Activated CD4-positive, alpha-beta T cell treated with anti-CD3 and anti-CD28 coated beads, Interleukin-2, amount 10 ng/mL, durations not matched to agents 24 days and 14 days (primary cell): ENCODE measurements at regions of chr6 and their contacts with region 1.

Region 1: DNA sequence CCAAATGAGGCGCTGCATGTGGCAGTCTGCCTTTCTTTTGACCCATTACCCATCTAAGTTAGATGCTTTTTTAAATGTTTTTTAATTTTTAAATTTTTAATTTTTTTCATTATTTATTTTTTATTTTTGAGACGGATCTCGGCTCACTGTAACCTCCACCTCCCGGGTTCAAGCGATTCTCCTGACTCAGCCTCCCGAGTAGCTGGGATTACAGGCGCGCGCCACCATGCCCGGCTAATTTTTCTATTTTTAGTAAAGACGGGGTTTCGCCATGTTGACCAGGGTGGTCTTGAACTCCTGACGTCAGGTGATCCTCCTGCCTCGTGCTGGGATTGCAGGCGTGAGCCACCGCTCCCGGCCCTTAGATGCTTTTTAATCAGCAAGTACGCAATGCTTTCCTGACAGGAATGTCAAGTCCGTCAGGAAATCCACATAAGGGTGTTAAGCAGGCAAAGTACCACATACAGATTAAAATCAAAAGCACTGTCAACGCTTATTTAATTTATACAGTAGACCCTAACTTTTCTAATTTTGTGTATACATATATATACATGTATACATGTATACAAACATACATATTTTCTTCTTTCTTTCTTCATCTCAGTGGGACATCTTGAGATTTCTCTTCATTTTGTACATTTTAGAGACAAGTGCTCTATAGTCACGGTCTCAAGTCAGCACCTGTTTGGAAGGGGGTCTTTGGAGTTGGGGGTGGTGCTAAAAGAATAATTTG is 995 bp upstream of the GSTA4 start:
- DNase-seq: peak; percentile 76
- H3K4me3 Mint-ChIP-seq: peak overlapping the region; percentile 94
- H3K27ac Mint-ChIP-seq: peak overlapping the region; percentile 99
- H3K4me1 Mint-ChIP-seq: peaks cover 39% of the 10 kb centered on the region
- H3K27me3 Mint-ChIP-seq: peaks cover 16% of the 10 kb centered on the region

Region 2: DNA sequence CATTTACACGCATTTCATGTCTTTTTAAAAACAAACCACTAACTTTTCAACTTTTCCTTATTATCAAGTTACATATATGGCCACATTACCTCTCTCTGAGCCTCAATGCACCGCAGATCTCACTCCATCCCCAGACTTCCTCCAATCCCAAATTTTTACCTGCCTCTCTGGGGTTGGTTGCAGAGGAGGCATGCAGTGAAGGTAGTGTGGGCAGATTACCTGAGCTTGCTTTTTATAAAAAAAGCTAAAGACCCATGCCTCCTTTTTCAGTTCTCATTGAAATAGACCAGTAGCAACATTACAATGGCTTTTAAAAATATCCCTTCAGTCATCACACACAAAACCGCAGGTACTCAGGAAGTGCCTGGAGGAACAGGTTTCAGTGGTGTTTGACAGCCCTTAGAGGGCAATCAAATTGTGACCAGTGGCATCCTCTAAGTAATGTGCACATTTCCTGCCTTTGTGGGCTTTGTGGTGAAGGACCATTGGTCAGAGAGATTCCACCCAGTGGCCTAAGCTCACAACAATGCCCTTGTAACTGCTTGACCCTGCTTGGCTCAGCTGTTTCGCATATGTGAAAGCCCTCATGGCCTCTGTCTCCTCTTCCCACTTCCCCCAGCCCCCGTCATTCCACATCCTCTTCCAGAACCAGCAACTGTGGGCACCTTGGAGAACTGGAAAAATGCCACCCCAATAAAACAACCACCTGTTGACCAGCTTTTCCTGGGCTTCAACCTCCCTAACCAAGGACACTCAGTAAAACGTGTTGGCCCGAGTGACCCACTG is 840.1 kb before region 1 on chr6:
- intact Hi-C with region 1: loop called (anchors 5 kb)
- DNase-seq: no peak
- H3K4me3 Mint-ChIP-seq: no peak overlapping the region
- H3K27ac Mint-ChIP-seq: peak overlapping the region; percentile 8
- H3K4me1 Mint-ChIP-seq: peaks cover 21% of the 10 kb centered on the region
- H3K27me3 Mint-ChIP-seq: peaks cover 15% of the 10 kb centered on the region

Region 3: DNA sequence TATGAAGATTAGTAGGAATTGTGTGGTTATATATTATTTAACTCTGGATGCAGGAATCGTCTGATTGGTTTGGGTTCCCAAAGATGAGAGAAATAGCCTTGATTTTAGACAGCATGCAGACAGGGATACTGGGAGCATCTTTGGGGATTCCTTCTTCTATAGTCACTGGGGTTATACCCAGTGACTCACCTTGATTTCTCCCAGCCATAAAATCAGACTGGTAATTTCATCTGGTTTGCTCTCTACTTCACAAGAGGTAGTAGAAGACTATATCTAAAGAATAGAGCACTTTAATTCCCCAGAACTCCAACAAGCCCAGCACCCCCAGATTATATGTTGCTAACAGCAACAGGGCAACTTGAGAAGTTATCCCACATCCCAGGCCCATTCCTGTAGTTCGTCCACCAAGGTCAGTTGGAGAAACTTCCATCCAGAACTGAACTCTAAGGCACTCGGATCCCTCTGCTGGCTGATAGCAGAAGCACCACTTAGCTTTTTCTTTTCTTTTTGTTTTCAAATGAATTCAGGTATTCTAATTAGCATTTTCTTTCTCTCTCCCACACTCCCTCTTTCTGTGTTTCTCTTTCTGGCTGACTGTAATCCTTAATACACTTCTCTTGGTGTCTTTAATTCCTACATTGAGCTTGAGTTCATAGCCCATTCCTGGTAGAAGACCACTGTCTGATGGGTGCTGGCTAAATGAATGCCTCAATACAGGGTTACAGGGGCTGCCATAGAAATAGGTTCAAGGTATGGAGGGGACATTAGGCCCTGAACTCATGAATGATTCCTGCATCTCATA is 596.4 kb before region 1 on chr6:
- intact Hi-C with region 1: loop called (anchors 10 kb)
- DNase-seq: peak; percentile 83
- H3K4me3 Mint-ChIP-seq: no peak overlapping the region
- H3K27ac Mint-ChIP-seq: no peak overlapping the region
- H3K4me1 Mint-ChIP-seq: peaks cover 45% of the 10 kb centered on the region
- H3K27me3 Mint-ChIP-seq: no peaks in the 10 kb centered on the region

Region 4: GRCh38 chr6:52670502-52671409 is 325.3 kb before region 1 on chr6 and contains the start of gene TMEM14A:
- intact Hi-C with region 1: loop called (anchors 2 kb)
- DNase-seq: peak; percentile 98
- H3K4me3 Mint-ChIP-seq: peak within 1 kb of the TSS; percentile 92
- H3K27ac Mint-ChIP-seq: peak within 1 kb of the TSS; percentile 82
- H3K4me1 Mint-ChIP-seq: peaks cover 24% of the 10 kb centered on the region
- H3K27me3 Mint-ChIP-seq: no peaks in the 10 kb centered on the region
- total RNA-seq, gene TMEM14A: 12.7 and 13.0 TPM in 2 replicates

Region 5: DNA sequence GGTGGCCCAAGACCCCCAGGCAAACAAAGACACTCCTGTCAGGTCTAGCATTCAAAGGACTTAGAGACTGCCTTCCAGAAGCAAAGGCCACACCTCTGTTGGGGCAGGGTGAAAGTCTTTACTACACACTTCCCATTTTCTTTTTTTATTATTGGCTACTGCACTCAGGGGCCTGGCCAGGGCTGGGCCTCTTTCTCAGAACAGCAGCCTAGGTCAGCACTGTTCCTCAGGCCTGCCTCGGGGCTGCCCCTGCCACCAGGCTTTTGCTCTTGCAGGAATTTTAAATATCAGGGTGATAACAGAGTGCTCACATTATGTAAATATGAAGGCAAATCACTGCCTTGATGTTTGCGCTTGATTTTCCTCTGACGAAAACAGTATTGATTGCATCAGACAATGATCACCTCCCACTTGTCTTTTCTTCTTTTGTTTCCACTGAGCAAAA is 19.5 kb before region 1 on chr6:
- intact Hi-C with region 1: loop called (anchors 1 kb)
- DNase-seq: no peak
- H3K4me3 Mint-ChIP-seq: peak overlapping the region; percentile 60
- H3K27ac Mint-ChIP-seq: peak overlapping the region; percentile 91
- H3K4me1 Mint-ChIP-seq: peaks cover 36% of the 10 kb centered on the region
- H3K27me3 Mint-ChIP-seq: no peaks in the 10 kb centered on the region

Region 6: GRCh38 chr6:53011652-53012374 is 15.7 kb after region 1 on chr6:
- intact Hi-C with region 1: no loop called
- DNase-seq: no peak
- H3K4me3 Mint-ChIP-seq: no peak overlapping the region
- H3K27ac Mint-ChIP-seq: no peak overlapping the region
- H3K4me1 Mint-ChIP-seq: no peaks in the 10 kb centered on the region
- H3K27me3 Mint-ChIP-seq: no peaks in the 10 kb centered on the region

Region 7: GRCh38 chr6:53335208-53335994 is 339.3 kb after region 1 on chr6:
- intact Hi-C with region 1: loop called (anchors 10 kb)
- DNase-seq: peak; percentile 92
- H3K4me3 Mint-ChIP-seq: peak overlapping the region; percentile 81
- H3K27ac Mint-ChIP-seq: peak overlapping the region; percentile 97
- H3K4me1 Mint-ChIP-seq: peaks cover 67% of the 10 kb centered on the region
- H3K27me3 Mint-ChIP-seq: no peaks in the 10 kb centered on the region